ENCODE measurements at regions of chr1 and their contacts with region 1.

Region 1: DNA sequence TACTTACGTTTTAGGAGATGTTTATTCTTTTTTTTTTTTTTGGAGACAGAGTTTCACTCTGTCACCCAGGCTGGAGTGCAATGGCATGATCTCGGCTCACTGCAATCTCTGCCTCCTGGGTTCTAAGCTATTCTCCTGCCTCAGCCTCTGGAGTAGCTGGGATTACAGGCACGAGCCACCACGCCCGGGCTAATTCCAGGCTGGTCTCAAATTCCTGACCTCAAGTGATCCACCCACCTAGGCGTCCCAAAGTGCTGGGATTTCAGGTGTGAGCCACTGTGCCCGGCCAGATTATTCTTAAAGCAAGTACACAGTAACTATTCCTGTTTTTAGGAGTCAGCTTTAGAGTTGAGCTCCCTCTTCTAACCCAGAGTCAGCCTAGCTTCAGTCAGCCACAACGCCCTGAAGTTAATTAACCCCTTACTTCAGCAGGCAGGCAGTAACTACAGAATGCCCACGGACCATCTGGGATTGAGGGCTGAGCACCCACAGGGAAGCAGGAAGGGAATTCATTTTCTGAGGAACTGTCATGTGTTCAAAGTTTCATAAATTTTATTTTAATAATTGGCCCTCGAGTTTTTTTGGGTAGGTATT is 5.3 kb upstream of the ID3 start:
- DNase-seq: no peak
- H3K4me3 ChIP-seq: no peak overlapping the region
- H3K27ac ChIP-seq: peak overlapping the region; percentile 52
- H3K4me1 ChIP-seq: peaks cover 51% of the 10 kb centered on the region
- H3K27me3 ChIP-seq: no peaks in the 10 kb centered on the region
- CTCF ChIP-seq: no peak

Region 2: GRCh38 chr1:23576338-23577055 is 11.9 kb after region 1 on chr1:
- CTCF ChIA-PET with region 1: no interaction called
- POLR2A ChIA-PET with region 1: no interaction called
- intact Hi-C with region 1: no loop called
- DNase-seq: no peak
- H3K4me3 ChIP-seq: no peak overlapping the region
- H3K27ac ChIP-seq: no peak overlapping the region
- H3K4me1 ChIP-seq: no peaks in the 10 kb centered on the region
- H3K27me3 ChIP-seq: no peaks in the 10 kb centered on the region
- CTCF ChIP-seq: no peak

Region 3: GRCh38 chr1:23838401-23838866 is 273.8 kb after region 1 on chr1:
- CTCF ChIA-PET with region 1: no interaction called
- POLR2A ChIA-PET with region 1: interaction called, 16 read pairs
- intact Hi-C with region 1: no loop called
- DNase-seq: peak; percentile 79
- H3K4me3 ChIP-seq: peak overlapping the region; percentile 37
- H3K27ac ChIP-seq: no peak overlapping the region
- H3K4me1 ChIP-seq: peaks cover 8% of the 10 kb centered on the region
- H3K27me3 ChIP-seq: peaks cover 3% of the 10 kb centered on the region
- CTCF ChIP-seq: no peak